CD4-positive, alpha-beta T cell (primary cell): ENCODE measurements at regions of chr11 and their contacts with region 1.

Region 1: DNA sequence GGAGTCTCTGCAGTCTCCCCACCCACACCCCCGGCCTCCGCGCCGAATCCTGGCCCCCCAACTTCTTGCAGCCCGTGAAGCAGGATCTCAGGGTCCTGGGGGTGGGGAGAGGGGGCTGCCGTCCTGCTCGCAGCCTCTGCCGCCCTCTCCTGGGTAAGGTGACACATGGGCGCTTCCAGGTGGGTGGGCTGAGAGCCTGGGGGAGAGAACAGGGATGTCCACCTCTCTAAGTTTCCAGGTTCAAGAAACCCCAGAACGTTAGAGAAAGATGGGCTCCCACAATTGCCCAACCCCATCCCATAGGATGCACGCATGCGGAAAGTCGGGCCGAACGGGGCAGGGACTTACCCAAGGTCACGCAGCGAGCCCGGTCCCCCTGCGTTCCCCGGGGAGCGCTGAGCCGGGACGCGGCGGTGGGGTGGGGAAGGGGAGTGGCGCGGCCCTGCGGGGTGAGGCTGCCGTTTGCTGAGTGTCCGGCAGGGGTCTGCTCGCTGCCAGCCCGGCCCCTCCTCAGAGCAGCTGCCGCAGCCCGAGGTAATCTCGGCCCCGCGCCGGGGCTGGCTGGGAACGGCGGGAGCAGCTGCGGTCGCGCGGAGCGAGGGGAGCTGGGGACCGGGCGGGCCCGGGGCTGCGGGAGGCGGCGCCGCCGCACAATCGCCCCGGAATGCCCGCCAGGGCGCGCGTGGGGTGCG is 705 bp upstream of the CAPN1 start:
- DNase-seq: peak; percentile 22 to 80 (median 45)
- ATAC-seq: peak; percentile 67
- H3K4me3 ChIP-seq: peak overlapping the region; percentile 97
- H3K4me3 Mint-ChIP-seq: peak overlapping the region; percentile 94
- H3K27ac ChIP-seq: no peak overlapping the region
- H3K27ac Mint-ChIP-seq: peak overlapping the region; percentile 83
- H3K4me1 ChIP-seq: peaks cover 37% of the 10 kb centered on the region
- H3K4me1 Mint-ChIP-seq: peaks cover 12% of the 10 kb centered on the region
- H3K27me3 ChIP-seq: no peaks in the 10 kb centered on the region
- H3K27me3 Mint-ChIP-seq: no peaks in the 10 kb centered on the region
- CTCF ChIP-seq: peak; percentile 65

Region 2: GRCh38 chr11:65111744-65112414 is 69.1 kb before region 1 on chr11 and contains the start of gene TM7SF2:
- CTCF ChIA-PET with region 1: interaction called, 6 read pairs
- POLR2A ChIA-PET with region 1: interaction called, 8 read pairs
- intact Hi-C with region 1: loop called (anchors 1 to 2 kb)
- DNase-seq: peak; percentile 88 to 98 (median 94)
- ATAC-seq: peak; percentile 75
- H3K4me3 ChIP-seq: peak within 1 kb of the TSS; percentile 81
- H3K4me3 Mint-ChIP-seq: peak within 1 kb of the TSS; percentile 95
- H3K27ac ChIP-seq: peak within 1 kb of the TSS; percentile 62 to 68
- H3K27ac Mint-ChIP-seq: peak within 1 kb of the TSS; percentile 92
- H3K4me1 ChIP-seq: peaks cover 63% of the 10 kb centered on the region
- H3K4me1 Mint-ChIP-seq: peaks cover 36% of the 10 kb centered on the region
- H3K27me3 ChIP-seq: no peaks in the 10 kb centered on the region
- H3K27me3 Mint-ChIP-seq: no peaks in the 10 kb centered on the region
- CTCF ChIP-seq: no peak
- total RNA-seq, gene TM7SF2: 20.0 to 20.4 TPM